T-cell (primary cell): ENCODE measurements at regions of chr18 and their contacts with region 1.

Region 1: GRCh38 chr18:42011053-42011452 is 56.0 kb downstream of the PIK3C3 start:
- DNase-seq: no peak
- ATAC-seq: no peak
- H3K4me3 ChIP-seq: no peak overlapping the region
- H3K4me3 Mint-ChIP-seq: no peak overlapping the region
- H3K27ac ChIP-seq: no peak overlapping the region
- H3K27ac Mint-ChIP-seq: no peak overlapping the region
- H3K4me1 ChIP-seq: no peaks in the 10 kb centered on the region
- H3K4me1 Mint-ChIP-seq: peaks cover 2 to 7% (median 4%) of the 10 kb centered on the region in 3 donors
- H3K27me3 ChIP-seq: no peaks in the 10 kb centered on the region
- H3K27me3 Mint-ChIP-seq: no peaks in the 10 kb centered on the region

Region 2: DNA sequence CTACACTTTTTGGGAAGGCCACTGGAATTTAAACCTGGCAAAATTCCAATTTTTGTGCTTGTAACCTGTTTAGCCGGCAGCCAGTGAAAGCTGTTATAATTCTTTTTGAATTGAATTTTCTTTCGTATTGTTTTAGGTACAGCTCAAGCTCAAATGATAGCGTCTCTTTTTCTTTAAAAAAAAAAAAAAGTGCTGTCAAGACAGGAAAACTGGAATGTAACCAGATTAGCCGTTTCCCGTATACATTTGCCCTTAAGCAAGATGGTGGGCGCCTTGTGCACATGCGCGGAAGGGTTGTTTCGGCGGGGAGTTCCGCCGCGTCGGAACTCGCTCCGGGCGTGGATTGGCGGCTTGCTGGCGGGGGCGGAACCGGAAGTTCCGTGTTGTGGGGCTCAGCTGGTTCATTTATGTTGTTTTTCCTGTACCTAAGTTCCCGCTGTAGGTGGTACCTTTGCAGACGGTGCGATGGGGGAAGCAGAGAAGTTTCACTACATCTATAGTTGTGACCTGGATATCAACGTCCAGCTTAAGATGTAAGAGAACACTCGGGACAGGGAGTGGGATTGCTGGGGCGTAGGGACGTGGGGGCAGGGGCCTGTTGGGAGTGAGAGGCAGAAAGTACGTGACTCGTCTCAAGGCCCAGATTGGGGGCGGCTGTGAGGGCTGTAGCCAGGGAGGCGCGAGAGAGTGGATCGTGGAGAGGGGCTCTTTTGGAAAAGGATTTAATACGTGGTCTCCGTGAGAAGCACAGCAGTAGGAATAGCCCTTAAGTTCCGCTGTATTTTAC is 56.0 kb before region 1 on chr18 and contains the start of gene PIK3C3:
- CTCF ChIA-PET with region 1: no interaction called
- POLR2A ChIA-PET with region 1: interaction called, 3 to 11 read pairs
- DNase-seq: peak; percentile 91 to 98 (median 96)
- ATAC-seq: peak; percentile 95 to 97 (median 96)
- H3K4me3 ChIP-seq: peak within 1 kb of the TSS; percentile 74 to 92
- H3K4me3 Mint-ChIP-seq: peak within 1 kb of the TSS; percentile 99 to 100 (median 100)
- H3K27ac ChIP-seq: peak within 1 kb of the TSS; percentile 77
- H3K27ac Mint-ChIP-seq: peak within 1 kb of the TSS; percentile 98 to 100
- H3K4me1 ChIP-seq: peaks cover 2 to 17% of the 10 kb centered on the region in 2 experiments
- H3K4me1 Mint-ChIP-seq: peaks cover 36 to 44% (median 43%) of the 10 kb centered on the region in 3 donors
- H3K27me3 ChIP-seq: peaks cover 0 to 2% of the 10 kb centered on the region in 2 experiments
- H3K27me3 Mint-ChIP-seq: peaks cover 0 to 4% of the 10 kb centered on the region in 2 donors
- total RNA-seq, gene PIK3C3: 56.6 to 65.8 (median 62.2) TPM

Region 3: GRCh38 chr18:41992066-41992465 is 19.0 kb before region 1 on chr18:
- CTCF ChIA-PET with region 1: no interaction called
- POLR2A ChIA-PET with region 1: interaction called in 1 of 2 experiments, 12 read pairs
- DNase-seq: no peak
- ATAC-seq: no peak
- H3K4me3 ChIP-seq: no peak overlapping the region
- H3K4me3 Mint-ChIP-seq: no peak overlapping the region
- H3K27ac ChIP-seq: no peak overlapping the region
- H3K27ac Mint-ChIP-seq: no peak overlapping the region
- H3K4me1 ChIP-seq: no peaks in the 10 kb centered on the region
- H3K4me1 Mint-ChIP-seq: no peaks in the 10 kb centered on the region
- H3K27me3 ChIP-seq: no peaks in the 10 kb centered on the region
- H3K27me3 Mint-ChIP-seq: no peaks in the 10 kb centered on the region

Region 4: DNA sequence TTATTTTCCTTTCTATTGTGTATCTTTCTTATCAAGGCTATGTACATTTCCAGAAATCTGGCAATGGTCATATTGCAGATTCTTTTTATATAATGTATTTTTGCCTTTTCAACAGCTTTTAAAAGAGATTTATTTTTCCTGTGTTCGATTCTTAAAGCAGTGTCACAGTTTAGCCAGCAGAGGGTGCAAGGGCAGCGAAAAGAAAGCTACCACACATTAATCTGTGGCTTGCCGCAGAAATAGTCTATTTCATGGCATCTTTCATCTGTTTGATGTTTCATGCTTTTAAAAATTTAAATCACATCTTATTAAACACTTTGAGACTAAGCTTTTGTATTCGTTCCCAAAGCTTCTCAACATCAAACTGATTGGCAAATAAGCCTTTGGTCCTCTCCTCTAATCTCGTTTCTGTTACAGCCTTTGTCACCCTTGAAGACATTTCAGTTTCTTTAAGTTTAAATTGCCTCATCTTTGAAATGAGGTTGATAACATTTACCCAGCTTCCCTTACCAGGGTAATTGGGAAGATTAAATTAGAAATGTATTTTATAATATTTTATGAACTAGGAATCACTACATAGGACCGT is 17.3 kb after region 1 on chr18:
- CTCF ChIA-PET with region 1: interaction called, 4 to 16 read pairs
- POLR2A ChIA-PET with region 1: interaction called in 1 of 2 experiments, 3 read pairs
- DNase-seq: peak in 23 of 35 experiments; percentile 1 to 50 (median 11)
- ATAC-seq: peak; percentile 48 to 60 (median 51)
- H3K4me3 ChIP-seq: no peak overlapping the region
- H3K4me3 Mint-ChIP-seq: no peak overlapping the region
- H3K27ac ChIP-seq: no peak overlapping the region
- H3K27ac Mint-ChIP-seq: no peak overlapping the region
- H3K4me1 ChIP-seq: no peaks in the 10 kb centered on the region
- H3K4me1 Mint-ChIP-seq: peaks cover 10 to 31% (median 23%) of the 10 kb centered on the region in 3 donors
- H3K27me3 ChIP-seq: no peaks in the 10 kb centered on the region
- H3K27me3 Mint-ChIP-seq: no peaks in the 10 kb centered on the region